ENCODE measurements at regions of chr13 and their contacts with region 1.

Region 1: DNA sequence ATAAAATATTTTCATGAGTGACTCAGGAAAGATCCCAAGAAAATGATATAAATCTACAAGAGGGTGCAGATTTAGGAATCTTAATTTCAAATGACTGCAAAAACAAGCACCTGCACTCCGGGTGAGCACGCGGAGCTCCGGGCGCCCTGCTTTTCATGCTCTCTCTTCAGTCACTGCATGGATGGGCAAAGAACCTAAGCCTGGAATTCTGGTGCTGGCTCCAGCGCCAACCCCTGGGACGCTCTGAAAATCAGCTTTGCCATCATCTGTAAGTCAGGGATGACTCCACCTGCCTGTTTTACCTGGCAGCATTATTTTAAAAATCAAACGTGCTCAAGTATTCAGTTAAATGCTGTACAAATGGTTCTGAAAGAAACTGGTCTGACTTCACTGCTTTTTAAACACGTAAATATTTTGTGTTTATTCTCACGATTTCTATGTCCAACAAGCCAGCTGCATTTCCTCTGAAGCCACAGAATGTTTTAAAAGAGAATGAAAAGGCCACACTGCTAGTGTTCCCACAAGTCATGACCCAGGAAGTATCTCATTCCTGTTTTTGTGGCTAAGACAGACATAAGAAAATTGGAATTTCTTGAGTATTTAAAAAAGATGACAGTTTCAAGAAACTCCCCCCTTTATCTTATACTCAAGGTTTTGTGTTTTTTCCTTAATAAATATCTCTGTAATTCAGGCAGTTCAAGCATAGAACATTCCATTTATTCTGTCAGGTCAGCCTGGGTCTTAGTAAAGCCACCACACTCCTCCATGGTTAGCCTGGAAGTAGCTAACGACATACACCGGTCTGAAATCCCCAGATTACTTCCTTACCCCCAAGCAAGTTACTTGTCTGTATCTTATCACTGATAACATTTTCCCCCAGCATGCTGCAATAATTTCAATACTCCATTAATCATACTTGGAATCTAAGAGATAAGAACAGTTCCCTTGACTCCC is 81.1 kb downstream of the COL4A1 start:
- DNase-seq: no peak
- ATAC-seq: no peak
- H3K4me3 ChIP-seq: no peak overlapping the region
- H3K27ac ChIP-seq: no peak overlapping the region
- H3K4me1 ChIP-seq: no peaks in the 10 kb centered on the region
- H3K27me3 ChIP-seq: no peaks in the 10 kb centered on the region
- CTCF ChIP-seq: no peak

Region 2: DNA sequence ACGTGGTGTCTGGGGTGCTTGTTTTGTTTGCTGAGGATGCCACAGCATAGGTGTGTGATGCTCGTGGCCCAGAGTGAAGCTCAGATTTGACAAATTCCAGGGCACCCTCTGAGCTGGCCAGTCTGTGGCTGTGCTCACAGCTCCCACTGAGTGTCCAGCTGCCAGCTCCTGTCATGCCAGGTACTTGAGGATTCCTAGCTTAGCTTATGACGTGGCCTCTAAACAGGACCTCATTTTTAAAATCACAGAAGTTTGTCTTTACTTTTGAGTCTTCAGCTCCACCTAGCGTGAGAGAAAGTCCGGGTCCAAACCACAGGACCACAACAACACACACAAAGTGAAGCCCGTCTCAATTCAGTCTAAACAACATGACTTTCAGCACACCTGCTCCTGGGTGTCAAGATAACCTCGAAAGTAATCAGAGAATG is 218.4 kb after region 1 on chr13:
- CTCF ChIA-PET with region 1: interaction called, 3 read pairs
- POLR2A ChIA-PET with region 1: no interaction called
- intact Hi-C with region 1: loop called (anchors 1 kb)
- DNase-seq: peak; percentile 24
- ATAC-seq: peak; percentile 32
- H3K4me3 ChIP-seq: no peak overlapping the region
- H3K27ac ChIP-seq: peak overlapping the region; percentile 55
- H3K4me1 ChIP-seq: peaks cover 55% of the 10 kb centered on the region
- H3K27me3 ChIP-seq: no peaks in the 10 kb centered on the region
- CTCF ChIP-seq: no peak; the same call in 1 of the 2 replicates